HEK293 (cell line): ENCODE measurements at regions of chr2 and their contacts with region 1.

Region 1: GRCh38 chr2:219160186-219161017 is at the start of gene NHEJ1:
- H3K4me3 ChIP-seq: peak within 1 kb of the TSS; percentile 83
- H3K27ac ChIP-seq: peak within 1 kb of the TSS; percentile 97
- H3K4me1 ChIP-seq: peaks cover 5% of the 10 kb centered on the region; the same call in 1 of the 2 replicates
- CTCF ChIP-seq: peak; percentile 96

Region 2: GRCh38 chr2:218876562-218877219 is 283.7 kb before region 1 on chr2:
- CTCF ChIA-PET with region 1: interaction called, 10 read pairs
- POLR2A ChIA-PET with region 1: no interaction called
- H3K4me3 ChIP-seq: no peak overlapping the region
- H3K27ac ChIP-seq: no peak overlapping the region
- H3K4me1 ChIP-seq: no peaks in the 10 kb centered on the region
- CTCF ChIP-seq: peak; percentile 84

Region 3: GRCh38 chr2:219029829-219030165 is 130.6 kb before region 1 on chr2:
- CTCF ChIA-PET with region 1: interaction called, 119 read pairs
- POLR2A ChIA-PET with region 1: no interaction called
- H3K4me3 ChIP-seq: no peak overlapping the region
- H3K27ac ChIP-seq: no peak overlapping the region
- H3K4me1 ChIP-seq: no peaks in the 10 kb centered on the region
- CTCF ChIP-seq: peak; percentile 93

Region 4: DNA sequence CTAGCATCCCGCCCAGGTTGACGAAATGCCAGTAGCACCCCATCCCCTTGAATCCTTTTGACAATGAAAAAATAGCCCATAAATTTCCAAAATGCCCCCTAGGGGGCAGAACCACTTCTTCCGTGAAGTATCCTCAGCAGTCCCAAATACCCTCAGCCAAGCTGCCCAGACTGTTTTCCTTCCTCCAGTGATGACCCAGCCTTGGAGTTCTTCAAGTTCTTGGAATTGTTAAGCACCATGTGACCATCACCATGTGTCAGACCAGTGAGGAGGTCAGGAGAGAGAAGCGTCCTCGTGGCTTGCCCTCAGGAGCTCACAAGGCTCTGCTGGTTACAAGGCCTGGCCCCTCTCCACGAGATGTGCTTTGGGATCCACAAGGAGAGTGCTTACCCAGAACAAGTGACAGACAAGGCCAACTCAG is 10.8 kb after region 1 on chr2:
- CTCF ChIA-PET with region 1: interaction called, 32 read pairs
- POLR2A ChIA-PET with region 1: interaction called, 5 read pairs
- H3K4me3 ChIP-seq: no peak overlapping the region
- H3K27ac ChIP-seq: no peak overlapping the region
- H3K4me1 ChIP-seq: 0 out of 2 replicates have a peak, but pooled peaks cover 4% of the 10 kb centered on the region
- CTCF ChIP-seq: peak; percentile 28; the same call in 1 of the 2 replicates

Region 5: DNA sequence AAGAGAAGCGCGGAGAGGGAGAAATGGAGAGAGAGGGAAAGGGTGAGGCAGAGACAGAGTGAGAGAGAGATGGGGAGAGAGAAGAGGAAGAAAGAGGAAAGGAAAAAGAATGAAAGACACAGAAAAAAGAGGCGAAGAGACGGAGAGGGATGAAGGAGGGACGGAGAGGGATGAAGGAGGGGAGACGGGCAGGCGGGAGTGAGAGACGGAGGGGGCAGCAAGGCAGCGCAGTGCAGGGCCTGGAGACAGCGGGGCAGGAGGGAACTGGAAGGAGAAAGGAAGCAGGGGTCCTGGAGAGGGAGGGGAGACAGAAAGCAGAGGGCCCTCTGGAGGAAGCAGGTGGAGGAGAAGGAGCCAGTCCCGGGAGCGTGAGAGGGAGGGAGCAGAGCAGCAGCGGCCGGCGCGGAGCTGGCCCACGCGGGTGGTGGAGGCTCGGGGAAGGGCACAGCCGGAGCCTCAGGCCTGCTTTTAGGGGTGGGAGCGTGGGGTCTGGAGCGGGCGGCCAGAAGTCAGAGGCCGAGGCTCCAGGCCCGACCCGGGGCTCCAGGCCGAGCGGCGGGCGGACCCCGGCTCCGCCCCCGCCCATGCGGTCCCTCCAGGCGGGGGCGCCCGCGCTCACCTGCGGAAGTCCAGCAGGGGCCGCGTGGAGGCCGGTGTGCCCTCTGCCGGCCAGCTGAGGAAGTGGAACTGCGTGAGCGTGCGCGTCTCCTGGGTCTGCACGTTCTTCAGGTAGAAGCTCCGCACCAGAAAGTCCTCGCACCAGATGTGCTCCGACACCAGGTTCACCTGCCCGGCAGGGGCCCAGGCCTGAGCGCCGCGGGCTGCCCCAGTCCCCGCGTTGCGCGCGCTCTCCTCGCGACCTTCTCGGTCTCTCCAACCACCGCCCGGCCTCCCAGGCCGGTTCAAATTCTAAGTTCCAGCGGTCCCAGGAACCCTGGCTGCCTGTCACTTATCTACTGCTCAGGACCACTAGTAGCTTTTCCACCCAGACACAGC is 134.3 kb after region 1 on chr2:
- CTCF ChIA-PET with region 1: interaction called, 71 read pairs
- POLR2A ChIA-PET with region 1: no interaction called
- H3K4me3 ChIP-seq: peak overlapping the region; percentile 56
- H3K27ac ChIP-seq: peak overlapping the region; percentile 45; the same call in 1 of the 2 replicates
- H3K4me1 ChIP-seq: no peaks in the 10 kb centered on the region; the same call in 1 of the 2 replicates
- CTCF ChIP-seq: peak; percentile 88

Region 6: GRCh38 chr2:219388127-219388844 is 227.9 kb after region 1 on chr2:
- CTCF ChIA-PET with region 1: interaction called, 11 read pairs
- POLR2A ChIA-PET with region 1: no interaction called
- H3K4me3 ChIP-seq: peak overlapping the region; percentile 37
- H3K27ac ChIP-seq: peak overlapping the region; percentile 52; the same call in 1 of the 2 replicates
- H3K4me1 ChIP-seq: peaks cover 6% of the 10 kb centered on the region
- CTCF ChIP-seq: peak; percentile 53